ENCODE measurements at regions of chr1 and their contacts with region 1.

Region 1: DNA sequence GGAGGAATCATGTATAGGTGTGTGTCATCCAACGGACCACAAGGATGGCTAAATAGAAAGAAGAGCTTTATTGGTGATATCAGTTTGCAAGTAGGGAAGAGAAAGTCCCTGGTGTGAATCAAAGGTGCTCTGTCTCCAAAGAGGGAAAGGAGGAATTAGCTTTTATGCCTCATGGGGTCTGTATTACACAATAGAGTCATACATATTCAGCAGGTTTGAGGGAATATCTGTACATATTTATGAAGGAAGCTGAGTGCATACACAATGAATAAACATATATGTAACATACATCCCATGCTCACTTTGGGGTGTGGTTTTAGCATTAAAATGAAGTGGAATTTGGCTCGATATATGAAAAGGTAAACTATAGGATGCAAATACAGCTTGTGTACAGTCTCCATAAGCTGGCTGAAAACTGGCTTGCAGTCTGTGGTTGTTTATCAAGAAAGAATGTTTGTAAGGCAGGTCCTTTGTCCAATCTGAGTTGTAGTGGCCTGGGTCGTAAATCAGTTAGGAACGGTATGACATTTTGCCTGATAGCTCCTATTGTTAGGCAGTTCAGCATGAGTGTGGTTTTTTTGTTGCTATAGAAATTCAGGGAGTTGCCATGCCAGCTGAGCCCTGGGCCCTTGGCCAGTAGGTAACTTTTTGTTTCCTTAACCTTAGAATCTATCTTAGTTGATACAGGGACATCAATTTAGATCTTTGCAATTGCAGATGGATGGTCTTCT is 198.0 kb upstream of the ZP4 start:
- DNase-seq: no peak
- ATAC-seq: peak; percentile 46
- H3K4me3 Mint-ChIP-seq: no peak overlapping the region
- H3K27ac Mint-ChIP-seq: no peak overlapping the region
- H3K4me1 Mint-ChIP-seq: peaks cover 9% of the 10 kb centered on the region
- H3K27me3 Mint-ChIP-seq: no peaks in the 10 kb centered on the region
- CTCF ChIP-seq: no peak

Region 2: GRCh38 chr1:238018214-238018613 is 70.5 kb before region 1 on chr1:
- CTCF ChIA-PET with region 1: no interaction called
- POLR2A ChIA-PET with region 1: interaction called, 12 read pairs
- DNase-seq: no peak
- ATAC-seq: no peak
- H3K4me3 Mint-ChIP-seq: no peak overlapping the region
- H3K27ac Mint-ChIP-seq: no peak overlapping the region
- H3K4me1 Mint-ChIP-seq: no peaks in the 10 kb centered on the region
- H3K27me3 Mint-ChIP-seq: no peaks in the 10 kb centered on the region
- CTCF ChIP-seq: no peak

Region 3: DNA sequence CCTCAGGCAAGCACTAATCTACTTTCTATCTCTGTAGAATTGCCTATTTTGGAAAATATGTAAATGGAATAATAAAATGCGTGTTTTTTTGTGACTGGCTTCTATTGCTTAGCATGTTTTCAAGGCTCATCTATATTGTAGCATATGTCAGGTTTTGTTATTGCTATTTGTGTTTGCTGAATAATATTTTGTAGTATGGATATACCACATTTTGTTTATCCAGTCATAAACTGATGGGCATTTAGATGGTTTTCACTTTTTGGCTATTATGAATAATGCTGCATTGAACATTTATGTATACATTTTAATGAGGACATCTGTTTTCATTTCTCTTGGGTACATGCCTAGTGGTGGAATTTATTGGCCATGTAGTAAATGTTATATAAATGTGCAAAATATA is 14.7 kb before region 1 on chr1:
- CTCF ChIA-PET with region 1: no interaction called
- POLR2A ChIA-PET with region 1: no interaction called
- DNase-seq: no peak
- ATAC-seq: no peak
- H3K4me3 Mint-ChIP-seq: no peak overlapping the region
- H3K27ac Mint-ChIP-seq: no peak overlapping the region
- H3K4me1 Mint-ChIP-seq: peaks cover 6% of the 10 kb centered on the region
- H3K27me3 Mint-ChIP-seq: no peaks in the 10 kb centered on the region
- CTCF ChIP-seq: no peak

Region 4: GRCh38 chr1:238223076-238223640 is 134.4 kb after region 1 on chr1:
- CTCF ChIA-PET with region 1: no interaction called
- POLR2A ChIA-PET with region 1: no interaction called
- DNase-seq: no peak
- ATAC-seq: no peak
- H3K4me3 Mint-ChIP-seq: no peak overlapping the region
- H3K27ac Mint-ChIP-seq: no peak overlapping the region
- H3K4me1 Mint-ChIP-seq: peaks cover 14% of the 10 kb centered on the region
- H3K27me3 Mint-ChIP-seq: no peaks in the 10 kb centered on the region
- CTCF ChIP-seq: no peak